Activated CD4-positive, alpha-beta T cell treated with anti-CD3 and anti-CD28 coated beads for 36 hours (primary cell): ENCODE measurements at regions of chr5 and their contacts with region 1.

Region 1: DNA sequence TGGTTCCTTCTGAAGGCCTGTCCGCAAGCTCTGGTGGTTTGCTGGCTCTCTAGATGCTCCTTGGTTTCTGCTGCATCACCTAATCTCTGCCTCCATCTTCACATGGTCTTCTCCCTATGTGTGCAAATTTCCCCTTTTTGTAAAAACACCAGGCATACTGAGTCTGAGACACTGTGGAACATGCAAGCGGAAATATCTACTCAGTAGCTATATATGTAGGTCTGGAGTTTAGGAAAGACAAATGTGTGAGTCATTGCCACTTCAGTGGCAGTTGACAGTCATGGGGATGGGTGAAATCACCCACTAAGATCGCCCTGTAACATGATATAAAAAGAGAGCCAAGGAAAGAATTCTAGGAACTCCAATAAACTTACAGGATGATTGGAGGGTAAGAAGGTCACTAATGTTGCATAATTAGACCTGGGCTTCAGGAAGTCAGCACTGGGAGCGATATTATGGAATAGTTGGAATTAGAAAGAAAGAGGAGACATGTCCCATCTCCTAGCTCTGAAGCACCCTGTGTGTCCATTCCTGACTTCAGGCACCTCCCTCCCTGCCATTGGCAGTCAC is 22.7 kb upstream of the UBLCP1 start:
- DNase-seq: peak; percentile 25
- ATAC-seq: peak; percentile 84
- H3K4me3 Mint-ChIP-seq: no peak overlapping the region
- H3K27ac Mint-ChIP-seq: peak overlapping the region; percentile 62
- H3K4me1 Mint-ChIP-seq: peaks cover 45% of the 10 kb centered on the region
- H3K27me3 Mint-ChIP-seq: no peaks in the 10 kb centered on the region

Region 2: DNA sequence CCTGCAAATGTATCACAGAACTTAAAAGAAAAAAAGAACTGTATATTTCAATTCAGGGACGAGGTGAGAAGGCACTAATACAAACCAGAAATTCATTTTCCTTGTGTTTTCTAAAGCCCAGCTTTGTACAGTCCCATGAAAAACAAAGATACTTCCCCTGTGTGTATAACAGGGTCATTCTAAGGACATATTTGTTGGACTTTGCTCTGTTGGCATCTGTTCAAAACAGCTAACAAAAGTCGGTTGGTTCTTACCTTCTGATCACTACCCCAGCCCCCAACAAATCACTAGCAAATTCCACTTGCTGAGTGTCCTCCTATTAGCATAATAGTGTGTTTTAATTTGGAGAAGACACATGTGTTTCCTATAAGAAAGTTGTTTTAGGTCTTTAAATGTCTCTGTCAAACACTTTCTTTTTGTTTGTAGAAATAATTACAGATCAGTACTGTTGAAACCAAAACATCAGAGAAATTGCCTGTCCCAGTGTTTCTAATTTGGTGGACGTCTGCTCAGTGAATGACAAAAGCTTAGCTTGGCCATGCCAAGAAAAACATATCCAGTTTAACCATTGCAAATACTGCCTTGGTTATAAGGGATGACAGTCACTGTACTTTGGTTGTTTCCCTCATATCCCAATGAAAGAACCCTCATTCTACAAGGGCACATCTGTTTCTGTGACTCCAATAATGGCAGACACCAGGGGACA is 621.1 kb before region 1 on chr5:
- CTCF ChIA-PET with region 1: no interaction called
- POLR2A ChIA-PET with region 1: no interaction called
- intact Hi-C with region 1: no loop called
- DNase-seq: no peak
- ATAC-seq: no peak
- H3K4me3 Mint-ChIP-seq: no peak overlapping the region
- H3K27ac Mint-ChIP-seq: no peak overlapping the region
- H3K4me1 Mint-ChIP-seq: no peaks in the 10 kb centered on the region
- H3K27me3 Mint-ChIP-seq: no peaks in the 10 kb centered on the region

Region 3: GRCh38 chr5:159216454-159216853 is 23.9 kb before region 1 on chr5:
- CTCF ChIA-PET with region 1: interaction called, 5 read pairs
- POLR2A ChIA-PET with region 1: no interaction called
- intact Hi-C with region 1: loop called in 1 of 2 experiments (anchors 2 kb)
- DNase-seq: no peak
- ATAC-seq: peak; percentile 63
- H3K4me3 Mint-ChIP-seq: no peak overlapping the region
- H3K27ac Mint-ChIP-seq: no peak overlapping the region
- H3K4me1 Mint-ChIP-seq: peaks cover 28% of the 10 kb centered on the region
- H3K27me3 Mint-ChIP-seq: no peaks in the 10 kb centered on the region

Region 4: DNA sequence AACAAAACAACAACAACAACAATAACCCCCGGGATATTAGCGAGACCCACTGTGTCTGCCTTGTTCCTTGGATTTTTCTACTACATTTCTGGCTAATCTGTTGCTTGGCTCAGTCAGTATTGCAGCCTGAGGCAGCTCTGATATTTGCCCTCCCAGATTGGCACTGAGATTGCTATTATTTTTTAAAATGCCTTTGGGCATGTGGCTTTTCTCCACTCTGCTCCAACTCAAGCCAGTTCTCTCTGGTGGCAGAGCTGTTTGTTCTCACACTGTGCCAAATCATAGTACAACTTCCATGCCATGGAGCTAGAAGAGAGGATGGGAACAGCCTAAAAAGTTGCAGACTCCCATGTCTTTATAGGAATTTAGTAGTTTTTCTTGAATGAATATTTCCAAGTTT is 1767.5 kb after region 1 on chr5:
- CTCF ChIA-PET with region 1: no interaction called
- POLR2A ChIA-PET with region 1: no interaction called
- intact Hi-C with region 1: no loop called
- DNase-seq: no peak
- ATAC-seq: no peak
- H3K4me3 Mint-ChIP-seq: no peak overlapping the region
- H3K27ac Mint-ChIP-seq: no peak overlapping the region
- H3K4me1 Mint-ChIP-seq: no peaks in the 10 kb centered on the region
- H3K27me3 Mint-ChIP-seq: peaks cover 2% of the 10 kb centered on the region